CD4-positive, alpha-beta T cell (primary cell): ENCODE measurements at regions of chr16 and their contacts with region 1.

Region 1: DNA sequence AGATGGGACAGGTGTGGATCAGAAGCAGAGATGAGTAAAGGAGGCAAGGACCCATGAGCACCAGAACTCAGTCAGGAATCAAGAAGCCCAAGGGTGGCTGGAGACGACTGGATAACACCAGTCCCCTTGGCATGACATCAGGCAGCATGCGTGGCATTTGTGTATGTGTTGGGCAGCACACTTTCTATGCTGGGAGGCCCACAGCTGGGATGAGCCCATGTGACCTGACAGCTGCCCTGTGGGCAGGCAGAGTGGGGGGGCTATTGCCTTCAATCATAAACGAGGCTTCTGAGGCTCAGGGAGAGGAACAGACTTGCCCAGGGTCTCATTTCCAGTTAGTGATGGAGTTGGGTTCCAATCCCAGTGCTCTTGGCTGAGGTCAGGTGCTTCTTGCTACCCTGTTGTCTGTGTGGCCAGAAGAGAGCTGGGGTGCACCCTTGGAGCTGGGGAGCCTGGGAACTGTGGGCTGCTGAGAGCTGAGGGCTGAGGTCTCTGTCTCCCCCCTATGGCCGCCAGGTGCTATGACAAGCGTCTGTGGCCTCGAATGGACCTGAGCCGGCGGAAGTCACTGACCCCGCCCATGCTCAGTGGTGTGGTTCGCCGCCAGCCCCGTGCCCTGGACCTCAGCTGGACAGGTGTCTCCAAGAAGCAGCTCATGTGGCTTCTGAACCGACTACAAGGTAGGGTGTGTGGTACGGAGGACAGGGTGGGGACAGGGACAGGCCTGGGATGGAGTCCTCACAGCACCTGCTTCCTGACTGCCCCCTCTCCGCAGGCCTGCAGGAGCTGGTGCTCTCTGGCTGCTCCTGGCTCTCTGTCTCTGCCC is 7.1 kb upstream of the ORAI3 start:
- DNase-seq: peak; percentile 34 to 85 (median 50)
- ATAC-seq: peak; percentile 95
- H3K4me3 ChIP-seq: no peak overlapping the region
- H3K4me3 Mint-ChIP-seq: no peak overlapping the region
- H3K27ac ChIP-seq: peak overlapping the region in 1 of 2 donors; percentile 52
- H3K27ac Mint-ChIP-seq: no peak overlapping the region
- H3K4me1 ChIP-seq: peaks cover 13% of the 10 kb centered on the region
- H3K4me1 Mint-ChIP-seq: peaks cover 19% of the 10 kb centered on the region
- H3K27me3 ChIP-seq: no peaks in the 10 kb centered on the region
- H3K27me3 Mint-ChIP-seq: no peaks in the 10 kb centered on the region
- CTCF ChIP-seq: peak; percentile 87

Region 2: DNA sequence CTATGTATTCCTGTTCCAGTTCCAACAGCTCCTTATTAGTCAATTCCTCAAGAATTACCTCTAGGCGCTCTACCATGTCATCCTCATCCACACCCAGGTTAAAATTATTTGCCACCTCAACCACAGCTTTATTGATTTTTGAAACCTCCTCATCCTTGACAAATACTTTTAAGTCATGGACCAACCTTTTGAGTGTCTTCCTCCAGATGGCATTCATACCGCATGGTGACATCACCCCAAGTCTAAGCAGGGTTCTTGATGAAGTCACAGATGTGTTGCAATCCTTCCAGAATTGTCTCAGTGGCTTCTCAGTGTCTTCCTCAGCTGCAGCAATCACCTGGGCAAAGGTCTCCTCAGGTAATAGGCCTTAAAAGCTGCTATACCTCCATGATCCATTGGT is 88.1 kb before region 1 on chr16:
- CTCF ChIA-PET with region 1: no interaction called
- POLR2A ChIA-PET with region 1: no interaction called
- intact Hi-C with region 1: no loop called
- DNase-seq: no peak
- ATAC-seq: no peak
- H3K4me3 ChIP-seq: no peak overlapping the region
- H3K4me3 Mint-ChIP-seq: no peak overlapping the region
- H3K27ac ChIP-seq: no peak overlapping the region
- H3K27ac Mint-ChIP-seq: no peak overlapping the region
- H3K4me1 ChIP-seq: no peaks in the 10 kb centered on the region
- H3K4me1 Mint-ChIP-seq: no peaks in the 10 kb centered on the region
- H3K27me3 ChIP-seq: no peaks in the 10 kb centered on the region
- H3K27me3 Mint-ChIP-seq: no peaks in the 10 kb centered on the region
- CTCF ChIP-seq: no peak

Region 3: DNA sequence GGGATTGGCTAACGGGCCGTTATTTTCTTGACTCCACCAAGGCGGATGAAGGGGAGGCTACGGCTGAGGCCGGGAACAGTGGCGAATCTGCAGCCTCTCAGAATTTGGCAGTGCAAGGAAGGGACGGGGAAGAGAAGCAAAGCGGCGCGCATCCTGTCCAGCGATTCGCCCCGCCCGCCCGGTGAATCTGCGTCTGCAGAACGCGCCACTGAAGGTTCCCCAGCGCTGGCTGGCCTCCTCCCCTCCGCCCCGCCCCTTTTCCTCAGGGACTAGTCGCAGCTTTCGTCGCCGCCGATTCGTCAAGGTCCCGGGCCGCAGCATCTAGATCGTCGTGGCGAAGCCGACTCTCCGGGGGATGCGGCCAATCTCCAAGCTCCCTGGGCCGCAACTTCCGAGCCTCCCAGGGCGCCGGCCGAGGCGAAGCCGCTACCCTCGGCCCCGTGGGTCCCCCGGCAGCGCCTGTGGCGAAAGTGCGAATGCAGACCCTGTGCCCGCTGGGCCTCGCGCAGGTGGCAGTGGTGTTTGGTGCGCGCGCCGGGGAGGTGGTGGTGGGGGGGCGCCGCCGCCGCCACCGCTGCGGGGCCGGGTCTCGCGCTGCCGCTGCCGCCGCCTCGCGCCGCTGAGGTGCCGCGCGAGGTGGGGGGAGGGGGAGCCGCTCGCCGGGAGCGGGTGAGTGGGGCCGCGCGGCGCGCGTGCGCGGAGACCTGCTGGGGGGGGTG is 15.8 kb after region 1 on chr16 and contains the start of gene SETD1A:
- CTCF ChIA-PET with region 1: interaction called, 14 read pairs
- POLR2A ChIA-PET with region 1: interaction called, 4 read pairs
- intact Hi-C with region 1: no loop called
- DNase-seq: peak; percentile 94 to 99 (median 97)
- ATAC-seq: peak; percentile 86
- H3K4me3 ChIP-seq: peak within 1 kb of the TSS; percentile 82
- H3K4me3 Mint-ChIP-seq: peak within 1 kb of the TSS; percentile 97
- H3K27ac ChIP-seq: peak within 1 kb of the TSS; percentile 95
- H3K27ac Mint-ChIP-seq: peak within 1 kb of the TSS; percentile 97
- H3K4me1 ChIP-seq: peaks cover 37% of the 10 kb centered on the region
- H3K4me1 Mint-ChIP-seq: peaks cover 39% of the 10 kb centered on the region
- H3K27me3 ChIP-seq: no peaks in the 10 kb centered on the region
- H3K27me3 Mint-ChIP-seq: no peaks in the 10 kb centered on the region
- CTCF ChIP-seq: no peak
- total RNA-seq, gene SETD1A: 40.1 to 41.2 TPM

Region 4: GRCh38 chr16:30977502-30977901 is 35.7 kb after region 1 on chr16:
- CTCF ChIA-PET with region 1: no interaction called
- POLR2A ChIA-PET with region 1: no interaction called
- intact Hi-C with region 1: no loop called
- DNase-seq: peak in 2 of 14 experiments; percentile 40 to 54
- ATAC-seq: peak; percentile 55
- H3K4me3 ChIP-seq: no peak overlapping the region
- H3K4me3 Mint-ChIP-seq: no peak overlapping the region
- H3K27ac ChIP-seq: no peak overlapping the region
- H3K27ac Mint-ChIP-seq: no peak overlapping the region
- H3K4me1 ChIP-seq: no peaks in the 10 kb centered on the region
- H3K4me1 Mint-ChIP-seq: no peaks in the 10 kb centered on the region
- H3K27me3 ChIP-seq: no peaks in the 10 kb centered on the region
- H3K27me3 Mint-ChIP-seq: no peaks in the 10 kb centered on the region
- CTCF ChIP-seq: no peak

Region 5: DNA sequence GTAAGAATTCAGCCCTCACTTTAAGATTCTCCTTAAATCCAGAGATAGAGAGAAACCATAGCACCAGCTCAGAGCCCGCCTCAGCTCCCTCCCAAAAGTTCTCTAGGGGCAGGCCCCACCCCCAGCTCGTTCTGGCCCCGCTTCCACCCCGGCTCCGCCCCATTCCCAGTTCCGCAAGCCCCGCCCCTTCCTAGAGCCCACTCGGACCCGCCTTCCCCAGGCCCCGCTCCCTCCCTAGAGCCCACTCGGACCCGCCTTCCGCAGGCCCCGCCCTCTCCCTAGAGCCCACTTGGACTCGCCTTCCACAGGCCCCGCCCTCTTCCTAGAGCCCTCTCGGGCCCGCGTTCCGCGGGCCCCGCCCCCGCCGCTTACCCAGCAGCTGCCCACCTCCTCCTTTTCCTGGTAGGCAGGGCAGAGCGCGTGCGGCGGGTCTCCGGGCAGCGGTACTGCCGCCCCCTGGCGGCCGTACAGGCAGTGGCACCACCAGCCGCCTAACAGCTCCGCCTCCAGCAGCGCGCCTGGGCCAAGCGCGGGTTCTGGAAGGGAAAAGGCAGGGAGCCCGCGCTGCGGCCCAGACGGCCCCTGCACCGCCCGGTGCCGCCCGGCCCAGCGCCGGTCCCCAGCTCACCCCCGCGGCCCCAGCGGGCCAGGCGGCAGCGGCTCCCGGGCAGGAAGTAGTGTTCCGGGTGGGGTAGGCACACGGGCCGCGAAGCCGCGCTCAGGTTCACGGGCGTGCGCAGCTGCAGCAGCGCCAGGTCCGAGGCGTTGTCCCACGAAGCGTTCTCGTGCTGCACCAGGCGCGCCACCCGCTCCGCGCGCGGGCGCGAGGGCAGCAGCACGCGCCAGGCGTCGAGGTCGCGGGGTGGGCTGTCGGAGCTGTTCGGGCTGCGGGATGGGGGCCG is 200.5 kb after region 1 on chr16:
- CTCF ChIA-PET with region 1: no interaction called
- POLR2A ChIA-PET with region 1: no interaction called
- intact Hi-C with region 1: no loop called
- DNase-seq: peak; percentile 88 to 100 (median 96)
- ATAC-seq: peak; percentile 86
- H3K4me3 ChIP-seq: peak overlapping the region; percentile 41
- H3K4me3 Mint-ChIP-seq: peak overlapping the region; percentile 84
- H3K27ac ChIP-seq: peak overlapping the region; percentile 29 to 76
- H3K27ac Mint-ChIP-seq: peak overlapping the region; percentile 84
- H3K4me1 ChIP-seq: peaks cover 23% of the 10 kb centered on the region
- H3K4me1 Mint-ChIP-seq: peaks cover 13% of the 10 kb centered on the region
- H3K27me3 ChIP-seq: no peaks in the 10 kb centered on the region
- H3K27me3 Mint-ChIP-seq: peaks cover under 1% of the 10 kb centered on the region
- CTCF ChIP-seq: peak; percentile 79

Region 6: GRCh38 chr16:32116080-32116479 is 1174.3 kb after region 1 on chr16:
- CTCF ChIA-PET with region 1: no interaction called
- POLR2A ChIA-PET with region 1: no interaction called
- intact Hi-C with region 1: no loop called
- DNase-seq: peak in 5 of 14 experiments; percentile 2 to 27 (median 19)
- ATAC-seq: no peak
- H3K4me3 ChIP-seq: peak overlapping the region; percentile 49
- H3K4me3 Mint-ChIP-seq: peak overlapping the region; percentile 76
- H3K27ac ChIP-seq: no peak overlapping the region
- H3K27ac Mint-ChIP-seq: no peak overlapping the region
- H3K4me1 ChIP-seq: peaks cover 6% of the 10 kb centered on the region
- H3K4me1 Mint-ChIP-seq: no peaks in the 10 kb centered on the region
- H3K27me3 ChIP-seq: peaks cover 4 to 6% of the 10 kb centered on the region in 2 experiments
- H3K27me3 Mint-ChIP-seq: peaks cover 8% of the 10 kb centered on the region
- CTCF ChIP-seq: no peak